Mammary epithelial cell (primary cell): ENCODE measurements at regions of chr11 and their contacts with region 1.

Region 1: DNA sequence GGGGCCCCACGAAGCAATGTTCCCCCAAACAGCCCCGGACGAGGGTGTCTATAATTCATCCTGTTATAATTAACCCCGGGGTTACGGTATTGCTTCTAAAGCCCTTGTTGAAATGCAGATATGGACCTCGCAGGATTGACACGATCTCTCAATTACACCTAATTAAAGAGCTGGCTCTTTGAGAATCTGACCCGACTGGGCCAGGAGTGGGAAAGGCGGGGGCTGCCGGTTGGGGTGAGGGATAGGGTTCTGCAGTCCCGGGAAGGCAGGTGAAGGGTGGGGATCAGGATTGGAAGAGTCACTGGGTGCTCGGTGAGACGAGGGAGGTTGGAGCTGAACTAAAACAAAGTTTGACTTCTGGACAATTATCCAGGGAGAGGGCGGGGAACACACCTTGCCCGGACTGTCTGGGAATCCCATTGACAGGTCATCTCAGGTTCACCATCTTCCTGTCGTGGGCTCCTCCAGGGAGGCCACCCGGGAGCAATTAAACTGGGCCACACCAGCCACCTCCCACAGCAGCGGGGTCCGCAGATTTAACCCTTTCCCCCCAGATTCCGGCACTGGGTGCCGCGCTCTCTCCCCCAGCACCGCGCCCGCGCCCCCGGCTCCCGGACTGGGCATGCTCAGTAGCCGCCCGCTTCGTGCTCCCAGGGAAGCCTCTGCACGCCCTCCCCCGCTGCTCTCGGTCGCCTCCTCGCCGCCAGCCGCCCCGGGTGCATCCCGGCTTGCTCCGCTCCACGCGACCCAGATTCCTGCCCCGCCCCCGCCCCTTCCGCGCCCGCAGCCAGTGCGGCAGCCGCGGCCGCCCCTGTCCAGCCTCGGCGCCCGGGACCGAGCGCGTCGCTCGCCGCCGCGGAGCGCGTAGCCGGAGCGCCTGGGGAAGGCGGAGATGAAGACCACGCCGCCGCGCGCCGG is at the start of gene ELMOD1:
- DNase-seq: peak; percentile 27
- H3K4me3 ChIP-seq: peak within 1 kb of the TSS; percentile 39 to 77 (median 55)
- H3K27ac ChIP-seq: no peak within 1 kb of the TSS
- H3K4me1 ChIP-seq: peaks cover 12% of the 10 kb centered on the region
- H3K27me3 ChIP-seq: peaks cover 14% of the 10 kb centered on the region
- CTCF ChIP-seq: peak in 1 of 2 donors; percentile 33
- total RNA-seq, gene ELMOD1: 0.17 to 0.21 TPM

Region 2: DNA sequence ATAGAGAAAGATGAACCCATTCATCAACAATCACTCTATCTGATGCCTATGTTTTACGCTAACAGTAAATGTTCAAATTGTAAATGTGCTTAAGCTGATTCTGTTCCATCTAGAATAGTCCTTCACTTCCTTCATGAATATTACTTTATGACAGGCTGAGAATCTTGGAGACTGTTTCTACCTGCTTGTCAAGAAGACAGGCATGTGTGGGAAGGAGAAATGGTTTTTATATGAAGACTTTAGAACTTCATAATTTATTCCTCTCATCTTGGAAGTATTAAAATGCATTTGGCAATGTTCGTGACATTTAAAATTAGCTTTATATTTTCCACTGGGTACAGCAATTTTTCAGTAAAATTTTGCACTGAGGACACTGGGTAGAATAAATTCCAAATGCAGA is 41.2 kb after region 1 on chr11:
- CTCF ChIA-PET with region 1: no interaction called
- dilution Hi-C with region 1: loop called (anchors 5 kb)
- in situ Hi-C with region 1: no loop called
- intact Hi-C with region 1: no loop called
- DNase-seq: no peak
- H3K4me3 ChIP-seq: no peak overlapping the region
- H3K27ac ChIP-seq: no peak overlapping the region
- H3K4me1 ChIP-seq: no peaks in the 10 kb centered on the region
- H3K27me3 ChIP-seq: peaks cover 2% of the 10 kb centered on the region
- CTCF ChIP-seq: no peak